ENCODE measurements at regions of chr18 and their contacts with region 1.

Region 1: DNA sequence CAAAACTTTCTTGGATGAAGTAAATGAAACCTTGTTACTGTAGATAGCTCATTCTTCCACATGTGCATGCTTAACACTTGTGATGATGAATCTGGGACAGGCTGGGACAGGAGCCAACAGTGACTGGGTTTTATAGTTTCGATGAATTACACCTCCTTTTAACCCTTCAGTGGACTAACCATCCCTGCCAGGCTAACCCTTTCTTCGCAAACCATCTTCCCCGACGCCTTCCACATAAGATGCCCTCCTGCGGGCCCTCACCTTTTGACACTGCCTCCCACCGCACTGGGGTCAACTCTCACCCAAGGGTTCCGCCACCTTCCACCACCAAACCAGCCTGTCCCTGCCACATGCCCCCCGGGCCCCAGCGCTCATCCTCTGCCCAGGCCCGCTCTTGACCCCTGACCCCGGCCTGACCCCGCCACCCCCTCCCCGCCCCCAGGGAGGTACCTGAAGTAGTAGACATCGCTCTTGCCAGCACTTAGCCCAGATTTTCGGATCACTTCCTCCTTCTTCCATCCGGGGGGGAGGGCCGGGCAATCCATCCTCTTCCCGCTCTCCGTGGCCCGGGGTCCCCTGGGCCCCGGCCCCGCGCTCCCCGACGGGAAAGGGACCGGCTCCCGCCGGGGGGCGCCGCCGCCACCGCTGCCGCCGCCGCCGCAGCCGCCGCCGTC is 764 bp downstream of the MBD2 start:
- DNase-seq: no peak
- CTCF ChIP-seq: no peak

Region 2: GRCh38 chr18:54191352-54191751 is 32.4 kb before region 1 on chr18:
- CTCF ChIA-PET with region 1: no interaction called
- POLR2A ChIA-PET with region 1: no interaction called
- DNase-seq: no peak
- CTCF ChIP-seq: no peak

Region 3: DNA sequence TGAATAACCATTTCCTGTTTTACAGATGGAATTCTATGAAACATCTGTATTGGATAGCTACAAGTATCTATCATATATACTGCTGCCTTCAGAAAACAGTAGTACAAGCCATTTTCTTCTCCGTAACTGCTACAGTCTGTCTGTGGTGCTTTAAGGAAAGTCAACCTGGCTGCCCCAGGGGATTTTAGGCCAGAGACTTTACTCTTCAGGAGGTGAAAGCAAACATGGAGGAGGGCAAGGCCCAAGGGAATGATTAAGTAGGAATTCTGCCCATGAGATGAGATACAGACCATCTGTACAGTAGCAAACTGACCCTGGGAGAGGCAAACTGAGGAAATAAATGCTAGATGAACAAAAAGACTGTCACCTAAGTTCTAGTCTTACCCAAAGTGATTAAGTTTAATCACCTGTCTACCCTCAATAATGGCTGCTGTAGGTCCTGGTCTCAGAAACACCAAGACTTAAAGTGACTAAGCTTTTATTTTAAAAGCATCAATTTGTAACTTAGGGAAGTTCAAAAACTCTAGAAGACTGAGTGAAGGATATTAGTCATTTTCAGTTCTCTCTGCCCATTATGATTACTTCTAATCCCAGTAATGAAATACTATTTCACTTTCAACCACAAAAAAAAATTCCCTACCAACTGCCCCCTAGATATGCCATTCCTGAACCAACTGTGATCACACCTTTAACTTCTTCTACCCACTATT is 14.1 kb before region 1 on chr18:
- CTCF ChIA-PET with region 1: interaction called, 15 read pairs
- POLR2A ChIA-PET with region 1: interaction called, 3 read pairs
- DNase-seq: peak; percentile 37
- CTCF ChIP-seq: no peak

Region 4: DNA sequence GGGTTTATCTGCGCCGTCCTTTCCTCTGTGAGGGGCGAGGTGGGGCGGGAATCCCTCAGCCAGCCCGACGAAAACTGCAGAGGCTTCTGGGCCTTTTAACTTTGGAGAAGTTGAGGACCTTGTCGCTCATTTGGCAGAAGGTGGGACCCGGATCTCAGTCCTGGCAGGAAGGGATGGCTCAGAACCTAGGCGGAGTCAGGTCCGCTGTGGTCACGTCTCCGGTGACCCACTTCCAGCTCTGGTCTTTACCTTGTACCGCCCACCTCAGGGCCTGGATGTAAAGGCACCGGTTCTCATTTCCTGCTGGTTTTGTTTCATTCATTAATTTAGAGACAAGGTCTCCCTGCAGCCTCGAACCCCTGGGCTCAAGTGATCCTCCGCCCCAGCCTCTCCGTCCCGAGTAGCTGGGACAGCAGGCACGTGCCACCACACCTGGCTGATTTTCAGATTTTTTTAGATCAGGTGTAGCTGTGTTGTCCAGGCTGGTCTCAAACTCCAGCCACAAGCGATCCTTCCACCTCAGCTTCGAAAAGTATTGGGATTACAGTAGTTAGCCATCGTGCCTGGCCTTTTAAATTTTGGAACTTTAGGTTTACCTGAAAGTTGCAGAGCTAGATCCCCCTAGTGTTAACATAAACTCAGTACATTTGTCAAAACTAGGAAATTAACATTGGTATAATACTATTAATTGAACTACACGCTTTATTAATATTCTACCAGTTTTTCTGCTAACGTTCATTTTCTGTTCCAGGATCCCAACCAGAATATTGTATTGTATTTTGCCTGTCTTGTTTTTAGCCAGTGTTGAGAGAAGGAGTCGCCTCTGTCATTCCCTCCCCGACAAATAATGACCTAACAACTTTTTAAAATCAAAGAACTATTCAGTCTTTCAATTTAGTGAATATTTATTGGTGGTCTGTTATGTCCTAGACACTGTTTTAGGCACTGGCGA is 46.5 kb after region 1 on chr18:
- CTCF ChIA-PET with region 1: interaction called, 37 read pairs
- POLR2A ChIA-PET with region 1: no interaction called
- DNase-seq: peak; percentile 41
- CTCF ChIP-seq: peak; percentile 51

Region 5: DNA sequence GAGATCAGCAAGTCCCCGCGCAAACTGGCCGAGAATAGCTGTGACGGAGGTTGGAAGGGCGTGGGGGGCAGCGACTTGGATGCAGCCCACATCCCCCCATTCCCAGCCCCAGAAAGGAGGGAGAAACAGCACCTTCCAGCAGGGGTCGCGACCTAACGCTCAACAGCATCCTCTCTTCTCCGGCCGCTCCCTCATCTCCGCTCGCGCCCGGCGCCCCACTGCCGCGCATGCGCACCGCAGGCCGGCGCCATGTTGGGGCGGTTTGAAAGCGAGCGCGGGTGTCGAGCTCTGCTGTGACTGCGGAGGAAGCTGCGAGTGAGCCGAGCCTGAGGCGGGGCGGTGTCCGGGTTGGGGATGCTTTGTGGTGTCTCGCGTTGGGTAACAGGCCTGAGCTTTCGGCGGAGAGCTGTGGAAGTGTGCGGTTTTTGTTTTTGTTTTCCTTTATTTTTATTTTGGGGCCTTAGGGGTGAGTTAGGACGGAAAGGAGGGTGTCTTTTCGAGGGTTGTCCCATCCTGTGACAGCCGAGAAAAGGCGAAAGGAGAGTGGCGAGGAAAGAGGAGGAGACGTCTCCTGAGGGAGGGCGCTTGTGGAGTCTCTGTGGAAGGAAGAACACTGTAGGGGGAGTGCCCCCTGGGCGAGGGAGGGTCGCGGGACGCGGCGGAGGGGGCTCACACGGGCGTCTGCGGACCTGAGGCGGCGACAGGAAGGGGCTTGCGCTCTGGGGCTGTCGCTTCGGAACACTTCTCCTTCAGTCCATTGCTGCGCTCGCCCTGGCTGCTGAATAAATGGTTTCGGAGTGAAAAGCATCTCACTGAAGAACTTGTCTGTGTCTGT is 134.2 kb after region 1 on chr18 and contains the starts of genes C18orf54 and STARD6:
- CTCF ChIA-PET with region 1: interaction called, 10 read pairs
- POLR2A ChIA-PET with region 1: no interaction called
- DNase-seq: peak; percentile 97
- CTCF ChIP-seq: peak; percentile 61

Region 6: DNA sequence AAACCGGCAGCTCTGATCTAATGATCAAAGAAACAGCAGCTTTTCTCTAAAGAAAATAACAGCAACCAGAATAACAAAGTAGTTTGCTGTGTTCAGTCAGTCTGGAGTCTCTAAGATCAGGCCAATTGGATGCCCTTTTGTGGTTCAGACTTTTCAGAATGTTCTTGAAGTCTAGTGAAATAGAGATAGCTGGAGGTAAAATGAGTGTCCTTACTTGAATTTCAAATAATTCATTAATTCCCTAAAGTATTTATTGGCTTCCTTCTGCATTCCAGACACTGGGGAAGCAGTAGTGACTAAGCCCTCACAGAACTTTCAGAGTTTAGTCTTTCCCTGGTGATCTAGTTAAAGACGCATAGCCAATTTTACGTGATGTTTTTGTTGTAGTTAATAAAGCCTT is 192.7 kb after region 1 on chr18:
- CTCF ChIA-PET with region 1: no interaction called
- POLR2A ChIA-PET with region 1: no interaction called
- DNase-seq: no peak
- CTCF ChIP-seq: no peak